ENCODE measurements at regions of chr19 and their contacts with region 1.

Region 1: DNA sequence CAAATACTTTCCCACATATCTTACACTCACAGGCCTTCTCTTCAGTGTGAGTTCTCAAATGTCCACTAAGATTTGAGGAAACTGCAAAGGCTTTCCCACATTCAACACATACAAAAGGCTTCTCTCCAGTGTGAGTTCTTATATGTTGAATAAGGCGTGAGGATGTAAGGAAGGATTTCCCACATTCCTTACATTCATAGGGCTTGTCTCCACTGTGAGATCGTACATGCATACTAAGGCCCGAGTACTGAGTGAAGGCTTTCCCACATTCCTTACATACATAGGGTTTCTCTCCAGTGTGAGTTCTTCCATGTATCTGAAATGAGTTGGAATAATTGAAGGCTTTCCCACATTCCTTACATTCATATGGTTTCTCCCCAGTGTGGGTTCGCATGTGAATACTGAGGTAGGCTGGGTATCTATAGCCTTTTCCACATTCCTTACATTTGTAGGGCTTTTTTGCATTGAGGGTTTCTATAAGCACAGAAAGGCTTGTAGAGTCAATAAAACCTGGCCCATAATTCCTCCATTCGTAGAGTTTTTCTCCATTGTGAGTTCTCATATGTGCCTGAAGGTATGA is 9.6 kb downstream of the ZNF426 start:
- DNase-seq: no peak
- ATAC-seq: no peak
- H3K4me3 ChIP-seq: no peak overlapping the region
- H3K27ac ChIP-seq: no peak overlapping the region
- H3K4me1 ChIP-seq: no peaks in the 10 kb centered on the region
- H3K27me3 ChIP-seq: no peaks in the 10 kb centered on the region
- CTCF ChIP-seq: no peak

Region 2: DNA sequence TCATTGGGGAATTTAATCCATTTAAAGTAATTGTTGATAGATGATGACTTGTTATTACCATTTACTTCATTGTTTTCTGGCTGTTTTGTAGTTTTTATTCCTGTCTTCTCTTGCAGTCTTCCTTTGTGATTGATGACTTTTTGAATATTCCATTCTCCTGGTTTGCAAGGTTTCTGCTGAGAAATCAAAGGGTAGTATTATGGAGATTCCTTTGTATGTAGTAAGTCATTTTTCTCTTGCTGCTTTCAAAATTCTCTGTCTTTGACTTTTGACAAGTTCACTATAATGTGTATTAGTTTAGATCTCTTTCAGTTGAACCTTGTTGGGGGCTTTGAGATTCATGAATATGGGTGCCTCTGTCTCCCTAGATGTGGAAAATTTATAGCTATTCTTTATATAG is 198.8 kb before region 1 on chr19:
- intact Hi-C with region 1: loop called in 1 of 10 experiments (anchors 10 kb)
- DNase-seq: no peak
- ATAC-seq: no peak
- H3K4me3 ChIP-seq: no peak overlapping the region
- H3K27ac ChIP-seq: no peak overlapping the region
- H3K4me1 ChIP-seq: peaks cover 0 to 9% (median 1%) of the 10 kb centered on the region in 9 donors
- H3K27me3 ChIP-seq: no peaks in the 10 kb centered on the region
- CTCF ChIP-seq: no peak

Region 3: GRCh38 chr19:9342610-9343304 is 186.1 kb before region 1 on chr19:
- intact Hi-C with region 1: loop called in 3 of 10 experiments (anchors 10 kb)
- DNase-seq: no peak
- ATAC-seq: no peak
- H3K4me3 ChIP-seq: no peak overlapping the region
- H3K27ac ChIP-seq: no peak overlapping the region
- H3K4me1 ChIP-seq: no peaks in the 10 kb centered on the region
- H3K27me3 ChIP-seq: no peaks in the 10 kb centered on the region
- CTCF ChIP-seq: no peak

Region 4: GRCh38 chr19:9621156-9622037 is 92.5 kb after region 1 on chr19 and contains the start of gene ZNF561:
- intact Hi-C with region 1: no loop called
- DNase-seq: peak; percentile 87 to 89
- ATAC-seq: peak; percentile 93 to 97 (median 96)
- H3K4me3 ChIP-seq: peak within 1 kb of the TSS; percentile 41 to 97 (median 84)
- H3K27ac ChIP-seq: peak within 1 kb of the TSS; percentile 79 to 98 (median 94)
- H3K4me1 ChIP-seq: peaks cover 3 to 40% (median 23%) of the 10 kb centered on the region in 9 donors
- H3K27me3 ChIP-seq: no peaks in the 10 kb centered on the region
- CTCF ChIP-seq: no peak
- total RNA-seq, gene ZNF561: 19.1 to 26.6 (median 23.7) TPM

Measured in heart right ventricle (tissue), 16 donors.